PC-9 (cell line): ENCODE measurements at regions of chr1 and their contacts with region 1.

Region 1: DNA sequence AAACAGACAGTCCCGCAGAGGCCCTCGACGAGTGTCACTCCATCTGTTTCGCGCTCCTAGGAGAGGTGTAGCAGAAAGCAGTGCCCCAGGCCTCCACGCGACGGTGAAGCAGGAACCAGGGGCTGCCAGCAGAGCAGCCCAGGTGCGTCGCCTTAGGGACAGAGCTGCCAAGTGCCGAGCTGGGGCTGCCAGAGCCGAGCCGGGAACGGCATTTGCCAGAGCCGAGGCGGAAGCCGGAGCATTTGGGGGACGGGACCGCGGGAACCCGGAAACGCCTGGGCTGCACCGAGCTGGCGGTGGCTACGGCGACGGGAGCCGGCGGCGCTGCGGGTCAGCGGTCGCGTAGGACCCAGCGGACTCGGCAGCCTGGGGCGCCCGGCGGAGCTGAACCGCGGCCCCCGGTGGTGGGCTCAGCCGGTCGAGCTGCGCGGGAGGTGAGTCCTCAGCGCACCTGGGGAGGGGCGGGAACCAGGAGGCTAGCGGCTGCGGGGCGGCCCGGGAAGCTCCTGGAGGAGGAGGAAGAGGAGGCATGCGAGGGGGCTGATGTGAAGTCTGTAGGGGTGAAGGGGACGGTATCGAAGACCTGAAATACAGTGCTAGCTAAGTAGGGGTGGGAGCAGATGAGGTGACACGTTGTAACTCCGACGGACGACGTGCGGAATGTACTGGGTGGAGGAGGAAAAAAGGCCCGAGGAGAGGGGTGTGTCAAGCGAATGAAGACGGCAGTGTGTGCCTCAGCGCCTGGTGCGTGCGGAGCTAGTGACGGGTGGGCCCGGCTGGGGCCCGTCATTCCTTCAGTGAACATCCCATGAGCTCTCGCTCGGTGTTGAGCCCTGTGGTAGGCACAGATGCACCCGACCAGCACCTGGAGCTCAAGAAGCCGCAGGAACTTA is at the start of gene SLC35A3:
- DNase-seq: peak; percentile 79 to 86
- H3K4me3 ChIP-seq: peak within 1 kb of the TSS; percentile 83
- H3K27ac ChIP-seq: peak within 1 kb of the TSS; percentile 67
- H3K4me1 ChIP-seq: peaks cover 51% of the 10 kb centered on the region
- H3K27me3 ChIP-seq: no peaks in the 10 kb centered on the region
- CTCF ChIP-seq: no peak
- total RNA-seq, gene SLC35A3: 22.9 and 23.5 TPM in 2 replicates

Region 2: GRCh38 chr1:99457381-99458165 is 512.4 kb before region 1 on chr1:
- CTCF ChIA-PET with region 1: no interaction called
- POLR2A ChIA-PET with region 1: no interaction called
- intact Hi-C with region 1: no loop called
- DNase-seq: peak in 1 of 2 experiments; percentile 81
- H3K4me3 ChIP-seq: no peak overlapping the region
- H3K27ac ChIP-seq: no peak overlapping the region
- H3K4me1 ChIP-seq: peaks cover 11% of the 10 kb centered on the region
- H3K27me3 ChIP-seq: no peaks in the 10 kb centered on the region
- CTCF ChIP-seq: no peak

Region 3: DNA sequence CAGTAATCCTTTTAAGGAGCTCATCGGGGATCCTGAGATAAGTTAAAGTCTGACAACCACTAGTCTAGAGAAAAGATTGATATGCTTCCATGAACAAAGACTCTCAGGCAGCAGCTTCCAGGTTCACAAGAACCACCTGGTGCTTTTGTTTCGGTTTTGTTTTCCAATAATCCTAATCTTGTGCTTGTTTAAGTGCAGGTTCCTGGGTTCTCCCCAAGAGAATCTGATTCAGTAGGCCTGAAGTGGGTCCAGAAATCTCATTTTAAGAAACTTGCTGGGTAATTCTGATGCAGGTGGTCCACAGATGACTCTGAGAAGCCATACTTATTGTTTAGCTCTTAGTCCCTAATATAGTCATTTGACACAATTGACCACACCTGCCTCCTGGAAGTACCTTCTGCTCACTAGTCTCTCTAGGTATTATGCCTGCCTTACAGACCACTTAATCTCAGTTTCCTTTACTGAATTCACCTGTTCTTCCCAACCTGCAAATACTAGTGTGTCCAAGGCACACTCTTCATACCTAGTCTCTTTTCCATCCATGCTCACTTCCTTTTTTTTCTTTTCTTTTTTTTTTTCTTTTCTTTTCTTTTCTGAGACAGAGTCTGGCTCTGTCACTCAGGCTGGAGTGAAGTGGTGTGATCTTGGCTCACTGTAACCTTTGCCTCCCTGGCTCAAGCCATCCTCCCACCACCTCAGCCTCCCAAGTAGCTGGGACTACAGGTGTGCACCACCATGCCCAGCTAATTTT is 183.0 kb before region 1 on chr1:
- CTCF ChIA-PET with region 1: no interaction called
- POLR2A ChIA-PET with region 1: no interaction called
- intact Hi-C with region 1: no loop called
- DNase-seq: peak in 1 of 2 experiments; percentile 24
- H3K4me3 ChIP-seq: no peak overlapping the region
- H3K27ac ChIP-seq: no peak overlapping the region
- H3K4me1 ChIP-seq: no peaks in the 10 kb centered on the region
- H3K27me3 ChIP-seq: no peaks in the 10 kb centered on the region
- CTCF ChIP-seq: no peak

Region 4: GRCh38 chr1:99849744-99850458 is 120.1 kb before region 1 on chr1 and contains the start of gene AGL:
- CTCF ChIA-PET with region 1: no interaction called
- POLR2A ChIA-PET with region 1: no interaction called
- intact Hi-C with region 1: loop called (anchors 2 kb)
- DNase-seq: peak; percentile 82 to 91
- H3K4me3 ChIP-seq: peak within 1 kb of the TSS; percentile 76
- H3K27ac ChIP-seq: peak within 1 kb of the TSS; percentile 66
- H3K4me1 ChIP-seq: peaks cover 20% of the 10 kb centered on the region
- H3K27me3 ChIP-seq: no peaks in the 10 kb centered on the region
- CTCF ChIP-seq: no peak
- total RNA-seq, gene AGL: 13.2 and 15.7 TPM in 2 replicates

Region 5: DNA sequence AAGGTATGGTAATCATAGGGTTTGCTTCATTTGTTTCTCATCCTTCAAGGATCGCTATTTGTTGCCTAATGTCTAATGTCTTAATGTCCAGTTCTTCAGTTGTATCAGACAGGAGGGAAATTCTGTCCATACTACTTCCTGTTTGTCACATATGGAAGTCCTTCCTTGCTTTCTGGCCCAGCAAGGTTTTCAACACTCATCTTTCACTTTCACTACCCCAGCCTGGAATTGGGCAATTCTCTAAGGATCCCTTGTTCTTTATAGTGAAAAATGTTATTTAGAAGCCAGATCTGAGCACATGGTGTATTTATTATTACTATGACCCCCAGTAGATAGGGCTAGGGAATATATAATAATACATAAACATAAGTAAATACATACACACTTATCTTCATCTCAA is 50.8 kb before region 1 on chr1:
- CTCF ChIA-PET with region 1: no interaction called
- POLR2A ChIA-PET with region 1: interaction called, 6 read pairs
- intact Hi-C with region 1: loop called (anchors 10 kb)
- DNase-seq: peak in 1 of 2 experiments; percentile 12
- H3K4me3 ChIP-seq: no peak overlapping the region
- H3K27ac ChIP-seq: no peak overlapping the region
- H3K4me1 ChIP-seq: no peaks in the 10 kb centered on the region
- H3K27me3 ChIP-seq: no peaks in the 10 kb centered on the region
- CTCF ChIP-seq: no peak

Region 6: DNA sequence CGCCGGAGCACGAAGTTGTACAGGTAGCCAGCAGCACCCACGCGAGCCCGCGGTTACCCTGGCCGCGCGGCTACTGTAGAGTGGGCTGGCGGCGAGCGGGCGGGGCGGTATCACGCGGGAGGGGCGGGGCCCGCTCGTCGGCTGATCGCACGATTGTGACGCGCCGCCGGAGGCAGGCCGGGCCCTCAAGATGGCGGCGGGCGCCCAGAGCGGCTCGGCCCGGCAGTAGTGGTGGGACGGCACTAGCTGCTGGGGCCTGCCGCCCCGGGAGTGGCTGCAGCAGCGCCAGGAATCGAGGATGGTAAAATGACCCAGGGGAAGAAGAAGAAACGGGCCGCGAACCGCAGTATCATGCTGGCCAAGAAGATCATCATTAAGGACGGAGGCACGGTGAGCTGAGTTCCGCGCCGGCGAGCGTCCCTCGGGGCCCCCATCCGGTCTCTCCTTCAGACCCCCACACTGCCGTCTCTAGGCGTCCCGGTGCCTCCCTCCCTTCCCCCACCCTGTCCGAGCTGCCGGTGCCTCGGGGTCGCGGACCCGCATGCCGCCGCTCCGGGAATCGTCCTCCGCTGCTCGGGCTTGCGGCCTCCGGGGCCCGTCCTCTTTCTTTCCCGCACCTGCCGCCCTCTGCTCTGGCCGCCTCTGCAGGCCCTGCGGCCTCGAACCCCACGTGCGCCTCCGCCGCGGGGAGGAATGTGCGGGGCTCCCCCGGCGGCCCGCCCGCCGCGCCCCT is 68.1 kb after region 1 on chr1:
- CTCF ChIA-PET with region 1: interaction called, 4 read pairs
- POLR2A ChIA-PET with region 1: interaction called, 3 read pairs
- intact Hi-C with region 1: loop called (anchors 5 kb)
- DNase-seq: peak; percentile 73 to 83
- H3K4me3 ChIP-seq: peak overlapping the region; percentile 90
- H3K27ac ChIP-seq: peak overlapping the region; percentile 84
- H3K4me1 ChIP-seq: peaks cover 33% of the 10 kb centered on the region
- H3K27me3 ChIP-seq: no peaks in the 10 kb centered on the region
- CTCF ChIP-seq: no peak; the same call in 1 of the 2 replicates